ENCODE measurements at regions of chrX and their contacts with region 1.

Region 1: DNA sequence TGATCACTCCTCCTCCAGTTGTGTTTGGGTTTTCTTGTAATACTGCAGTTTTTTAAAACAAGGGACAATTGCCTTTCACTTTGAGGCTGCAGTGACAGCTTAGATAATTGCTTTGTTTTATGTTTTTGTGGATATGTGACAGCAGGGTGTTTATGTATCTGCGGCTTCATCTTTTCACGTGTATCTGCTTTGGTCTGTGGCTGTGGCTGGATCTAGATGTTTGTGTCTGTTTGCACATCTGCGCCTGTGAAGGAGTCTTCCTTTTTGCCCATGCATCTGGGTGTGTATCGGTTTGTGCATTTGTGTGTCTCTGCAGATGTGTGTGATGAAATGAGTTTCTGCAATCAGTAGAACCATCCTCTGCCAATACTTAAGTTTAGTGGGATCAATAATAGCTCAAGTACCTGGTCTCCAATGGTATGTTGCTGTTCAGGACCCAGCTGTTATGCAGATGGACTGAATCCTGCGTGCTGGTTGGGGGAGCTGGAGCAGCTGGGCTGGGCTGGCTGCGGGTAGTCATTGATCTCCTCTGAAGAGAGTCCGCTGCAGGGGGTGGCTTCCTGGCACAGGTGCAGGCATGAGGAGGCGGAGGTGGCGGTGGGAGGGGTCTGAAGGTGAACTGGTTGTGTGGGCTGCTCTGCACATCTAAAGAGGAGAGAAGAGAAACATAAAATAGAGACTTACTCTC is 390.3 kb downstream of the SH2D1A start:
- DNase-seq: peak; percentile 36 to 77 (median 60)
- ATAC-seq: peak; percentile 83
- H3K4me3 ChIP-seq: peak overlapping the region; percentile 25
- H3K4me3 Mint-ChIP-seq: peak overlapping the region; percentile 78
- H3K27ac ChIP-seq: peak overlapping the region in 1 of 2 donors; percentile 7
- H3K27ac Mint-ChIP-seq: peak overlapping the region; percentile 96
- H3K4me1 ChIP-seq: peaks cover 12% of the 10 kb centered on the region
- H3K4me1 Mint-ChIP-seq: peaks cover 58% of the 10 kb centered on the region
- H3K27me3 ChIP-seq: no peaks in the 10 kb centered on the region
- H3K27me3 Mint-ChIP-seq: no peaks in the 10 kb centered on the region
- CTCF ChIP-seq: no peak

Region 2: DNA sequence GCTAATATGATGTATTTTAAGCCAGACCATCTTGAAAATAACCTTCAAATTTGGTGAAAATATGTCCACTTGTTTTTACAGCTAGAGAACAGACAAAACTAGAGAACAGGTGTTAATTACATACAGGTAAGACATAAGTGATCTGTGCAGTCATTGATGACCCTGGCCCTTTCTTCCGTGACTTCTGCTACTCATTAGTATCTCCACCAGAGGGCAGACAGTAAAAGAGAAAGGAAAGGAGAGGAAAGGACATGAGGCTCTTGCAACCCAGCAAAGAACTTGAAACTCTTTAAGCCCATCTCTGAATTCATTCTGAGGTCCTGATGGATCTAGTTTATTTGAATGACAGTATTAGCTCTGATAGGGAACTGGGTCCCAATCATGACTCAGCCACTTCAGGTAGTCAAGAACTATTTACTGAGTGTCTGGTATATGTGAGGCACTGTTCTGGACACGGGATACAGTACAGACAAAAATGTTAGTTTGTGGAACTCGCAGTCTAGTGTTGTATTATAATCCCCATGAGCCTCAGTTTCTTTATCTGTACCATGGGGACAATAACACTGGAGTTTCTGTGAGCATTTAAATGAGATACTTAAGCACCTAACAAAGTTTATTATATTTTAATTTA is 525.3 kb before region 1 on chrX:
- CTCF ChIA-PET with region 1: no interaction called
- POLR2A ChIA-PET with region 1: no interaction called
- intact Hi-C with region 1: loop called in 1 of 2 experiments (anchors 10 kb)
- DNase-seq: peak in 4 of 14 experiments; percentile 34 to 70 (median 66)
- ATAC-seq: peak; percentile 65
- H3K4me3 ChIP-seq: no peak overlapping the region
- H3K4me3 Mint-ChIP-seq: peak overlapping the region; percentile 35
- H3K27ac ChIP-seq: no peak overlapping the region
- H3K27ac Mint-ChIP-seq: peak overlapping the region; percentile 71
- H3K4me1 ChIP-seq: peaks cover 26% of the 10 kb centered on the region
- H3K4me1 Mint-ChIP-seq: peaks cover 43% of the 10 kb centered on the region
- H3K27me3 ChIP-seq: no peaks in the 10 kb centered on the region
- H3K27me3 Mint-ChIP-seq: no peaks in the 10 kb centered on the region
- CTCF ChIP-seq: peak; percentile 69

Region 3: DNA sequence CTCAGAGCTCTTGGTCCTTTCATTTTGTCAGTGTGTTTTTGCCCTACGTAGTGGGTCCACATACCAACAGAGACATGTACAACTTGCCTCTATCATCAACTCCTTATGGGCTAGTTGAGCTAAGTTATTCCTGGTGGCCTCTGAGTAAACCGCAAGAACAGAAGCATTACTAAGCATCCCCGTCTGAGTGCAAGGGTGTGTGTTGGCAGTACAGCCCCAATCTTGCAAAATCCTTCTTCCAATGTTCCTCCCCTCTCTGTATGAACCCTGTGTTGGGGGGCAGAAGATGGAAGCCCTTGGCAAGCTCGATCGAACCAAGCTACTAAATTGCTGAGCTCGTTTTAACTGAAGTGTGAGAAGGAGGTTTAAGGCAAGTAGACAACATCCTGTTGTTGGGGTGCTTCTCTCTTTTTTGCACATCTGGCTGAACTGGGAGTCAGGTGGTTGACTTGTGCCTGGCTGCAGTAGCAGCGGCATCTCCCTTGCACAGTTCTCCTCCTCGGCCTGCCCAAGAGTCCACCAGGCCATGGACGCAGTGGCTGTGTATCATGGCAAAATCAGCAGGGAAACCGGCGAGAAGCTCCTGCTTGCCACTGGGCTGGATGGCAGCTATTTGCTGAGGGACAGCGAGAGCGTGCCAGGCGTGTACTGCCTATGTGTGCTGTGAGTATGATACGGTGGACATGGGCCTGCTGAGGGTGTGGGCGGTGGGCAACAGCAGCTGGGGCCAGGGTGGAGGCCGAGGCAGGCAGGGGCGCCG is 390.4 kb before region 1 on chrX and contains the start of gene SH2D1A:
- CTCF ChIA-PET with region 1: no interaction called
- POLR2A ChIA-PET with region 1: interaction called, 3 read pairs
- intact Hi-C with region 1: loop called in 1 of 2 experiments (anchors 10 kb)
- DNase-seq: peak in 10 of 14 experiments; percentile 3 to 79 (median 33)
- ATAC-seq: peak; percentile 47
- H3K4me3 ChIP-seq: peak within 1 kb of the TSS; percentile 78
- H3K4me3 Mint-ChIP-seq: peak within 1 kb of the TSS; percentile 99
- H3K27ac ChIP-seq: peak within 1 kb of the TSS; percentile 69 to 75
- H3K27ac Mint-ChIP-seq: peak within 1 kb of the TSS; percentile 98
- H3K4me1 ChIP-seq: peaks cover 27% of the 10 kb centered on the region
- H3K4me1 Mint-ChIP-seq: peaks cover 52% of the 10 kb centered on the region
- H3K27me3 ChIP-seq: no peaks in the 10 kb centered on the region
- H3K27me3 Mint-ChIP-seq: no peaks in the 10 kb centered on the region
- CTCF ChIP-seq: no peak
- total RNA-seq, gene SH2D1A: 39.6 to 41.5 TPM

Region 4: DNA sequence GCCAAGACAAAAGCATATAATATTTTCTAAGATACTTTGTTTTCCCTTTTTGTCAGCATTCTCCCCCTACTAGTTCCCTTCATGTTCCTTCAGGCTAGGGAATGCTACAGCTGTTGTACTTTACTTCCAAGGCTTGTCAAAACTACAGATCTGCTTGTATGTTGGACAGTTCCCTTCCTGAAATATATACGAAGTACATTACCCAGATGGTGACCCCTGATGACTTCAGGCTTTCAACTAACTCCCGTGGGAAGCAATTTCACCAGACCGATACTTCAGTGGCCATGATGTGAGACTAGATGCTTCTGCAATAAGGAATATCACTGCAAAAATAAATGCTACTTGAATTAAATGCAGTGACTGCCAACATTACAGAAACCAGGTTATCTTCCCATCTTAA is 57.5 kb before region 1 on chrX:
- CTCF ChIA-PET with region 1: no interaction called
- POLR2A ChIA-PET with region 1: interaction called, 3 read pairs
- intact Hi-C with region 1: loop called in 1 of 2 experiments (anchors 5 kb)
- DNase-seq: no peak
- ATAC-seq: no peak
- H3K4me3 ChIP-seq: no peak overlapping the region
- H3K4me3 Mint-ChIP-seq: no peak overlapping the region
- H3K27ac ChIP-seq: no peak overlapping the region
- H3K27ac Mint-ChIP-seq: no peak overlapping the region
- H3K4me1 ChIP-seq: no peaks in the 10 kb centered on the region
- H3K4me1 Mint-ChIP-seq: no peaks in the 10 kb centered on the region
- H3K27me3 ChIP-seq: no peaks in the 10 kb centered on the region
- H3K27me3 Mint-ChIP-seq: no peaks in the 10 kb centered on the region
- CTCF ChIP-seq: no peak

Measured in CD4-positive, alpha-beta T cell (primary cell).